A549 (cell line): ENCODE measurements at regions of chr1 and their contacts with region 1.

Region 1: DNA sequence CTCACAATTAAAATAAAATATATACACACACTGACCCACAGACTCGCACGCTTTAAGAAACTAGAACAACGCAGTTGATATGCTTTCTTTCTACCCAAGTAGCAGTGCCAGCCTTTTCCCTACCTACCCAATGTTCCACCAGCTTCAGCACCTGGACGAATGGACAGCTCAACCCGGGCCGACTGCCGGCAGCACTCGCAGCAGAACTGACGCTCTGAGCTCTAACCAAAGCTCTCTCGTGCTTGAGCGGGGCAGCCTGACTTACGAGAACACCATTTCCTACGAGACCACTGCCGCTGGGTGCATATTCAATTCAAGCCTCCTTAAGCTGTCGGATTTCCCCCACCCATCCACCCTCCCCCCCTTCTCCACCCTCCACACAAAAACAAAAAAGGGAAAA is 127.4 kb upstream of the DPYD start:
- DNase-seq: peak; percentile 26 to 58
- ATAC-seq: peak; percentile 13 to 39; a peak in 1 of 6 replicates
- H3K4me3 ChIP-seq: no peak overlapping the region
- H3K27ac ChIP-seq: no peak overlapping the region
- H3K4me1 ChIP-seq: peaks cover 19% of the 10 kb centered on the region; the same call in 2 of the 3 replicates
- CTCF ChIP-seq: no peak
- EP300 ChIP-seq: no peak
- POLR2A ChIP-seq: no peak
- RAD21 ChIP-seq: 0 out of 5 replicates have a peak, but pooled peaks of 1 of the 2 experiments have one; percentile 11

Region 2: GRCh38 chr1:98143403-98143802 is 95.2 kb after region 1 on chr1:
- CTCF ChIA-PET with region 1: no interaction called
- POLR2A ChIA-PET with region 1: no interaction called
- DNase-seq: no peak
- ATAC-seq: no peak
- H3K4me3 ChIP-seq: no peak overlapping the region
- H3K27ac ChIP-seq: no peak overlapping the region
- H3K4me1 ChIP-seq: no peaks in the 10 kb centered on the region
- CTCF ChIP-seq: no peak
- EP300 ChIP-seq: no peak
- POLR2A ChIP-seq: no peak
- RAD21 ChIP-seq: no peak

Region 3: GRCh38 chr1:98468111-98468717 is 420.0 kb after region 1 on chr1:
- CTCF ChIA-PET with region 1: interaction called, 16 read pairs
- POLR2A ChIA-PET with region 1: no interaction called
- DNase-seq: peak; percentile 7 to 71
- ATAC-seq: peak in 1 of 2 experiments; percentile 48; a peak in 2 of 6 replicates
- H3K4me3 ChIP-seq: no peak overlapping the region
- H3K27ac ChIP-seq: peak overlapping the region in 1 of 2 experiments; percentile 37; a peak in 4 of 6 replicates
- H3K4me1 ChIP-seq: peaks cover 16% of the 10 kb centered on the region; the same call in 2 of the 3 replicates
- CTCF ChIP-seq: peak; percentile 89
- EP300 ChIP-seq: no peak
- POLR2A ChIP-seq: no peak
- RAD21 ChIP-seq: peak; percentile 86 to 93